CD14-positive monocyte (primary cell): ENCODE measurements at regions of chr12 and their contacts with region 1.

Region 1: DNA sequence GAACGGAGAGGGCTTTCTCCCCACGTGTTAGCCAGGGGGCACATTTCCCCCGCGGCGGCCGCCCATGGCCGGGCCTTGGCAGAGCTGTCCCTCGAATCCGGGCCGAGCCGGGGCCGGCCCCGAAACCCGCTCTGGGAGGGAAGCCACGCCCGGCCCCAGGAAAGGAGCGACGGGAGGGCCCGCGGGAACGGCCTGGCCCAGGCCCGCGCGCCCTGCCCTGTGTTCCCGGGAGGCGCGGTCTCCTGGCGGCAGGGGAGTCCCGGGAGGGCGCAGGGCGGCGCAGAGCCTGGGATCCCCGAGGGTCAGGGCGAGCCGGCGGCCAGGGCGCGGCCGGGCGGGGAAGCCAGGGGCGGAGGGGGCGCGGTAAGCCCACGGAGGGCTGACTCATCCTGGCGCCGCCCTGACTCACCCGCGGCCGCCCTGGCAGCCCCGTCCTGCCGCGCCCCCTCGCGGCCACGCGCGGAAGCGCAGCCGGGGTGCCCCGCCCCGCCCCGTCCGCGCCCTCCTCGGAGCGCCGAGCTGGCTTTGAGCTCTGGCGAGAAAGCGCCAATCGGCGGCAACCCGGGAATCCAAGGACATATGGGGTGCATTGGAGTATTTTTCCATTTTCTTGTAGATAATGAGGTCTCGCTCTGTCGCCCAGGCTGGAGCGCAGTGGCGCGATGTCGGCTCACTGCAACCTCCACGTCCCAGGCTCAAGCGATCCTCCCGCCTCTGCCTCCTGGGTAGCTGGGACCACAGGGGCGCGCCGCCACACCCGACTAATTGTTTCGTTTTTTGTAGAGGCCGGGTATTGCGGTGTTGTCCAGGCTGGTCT is 31.8 kb upstream of the PLEKHG6 start:
- DNase-seq: peak; percentile 84 to 93 (median 92)
- H3K4me3 ChIP-seq: peak overlapping the region; percentile 35 to 72 (median 44)
- H3K4me3 Mint-ChIP-seq: peak overlapping the region; percentile 77 to 88
- H3K27ac ChIP-seq: peak overlapping the region in 1 of 2 donors; percentile 86
- H3K27ac Mint-ChIP-seq: peak overlapping the region; percentile 54 to 94 (median 90)
- H3K4me1 ChIP-seq: peaks cover 7 to 14% of the 10 kb centered on the region in 2 donors
- H3K4me1 Mint-ChIP-seq: peaks cover 9% of the 10 kb centered on the region
- H3K27me3 ChIP-seq: peaks cover 0 to 38% of the 10 kb centered on the region in 2 donors
- H3K27me3 Mint-ChIP-seq: peaks cover 34 to 49% (median 46%) of the 10 kb centered on the region in 3 donors
- CTCF ChIP-seq: peak; percentile 94

Region 2: DNA sequence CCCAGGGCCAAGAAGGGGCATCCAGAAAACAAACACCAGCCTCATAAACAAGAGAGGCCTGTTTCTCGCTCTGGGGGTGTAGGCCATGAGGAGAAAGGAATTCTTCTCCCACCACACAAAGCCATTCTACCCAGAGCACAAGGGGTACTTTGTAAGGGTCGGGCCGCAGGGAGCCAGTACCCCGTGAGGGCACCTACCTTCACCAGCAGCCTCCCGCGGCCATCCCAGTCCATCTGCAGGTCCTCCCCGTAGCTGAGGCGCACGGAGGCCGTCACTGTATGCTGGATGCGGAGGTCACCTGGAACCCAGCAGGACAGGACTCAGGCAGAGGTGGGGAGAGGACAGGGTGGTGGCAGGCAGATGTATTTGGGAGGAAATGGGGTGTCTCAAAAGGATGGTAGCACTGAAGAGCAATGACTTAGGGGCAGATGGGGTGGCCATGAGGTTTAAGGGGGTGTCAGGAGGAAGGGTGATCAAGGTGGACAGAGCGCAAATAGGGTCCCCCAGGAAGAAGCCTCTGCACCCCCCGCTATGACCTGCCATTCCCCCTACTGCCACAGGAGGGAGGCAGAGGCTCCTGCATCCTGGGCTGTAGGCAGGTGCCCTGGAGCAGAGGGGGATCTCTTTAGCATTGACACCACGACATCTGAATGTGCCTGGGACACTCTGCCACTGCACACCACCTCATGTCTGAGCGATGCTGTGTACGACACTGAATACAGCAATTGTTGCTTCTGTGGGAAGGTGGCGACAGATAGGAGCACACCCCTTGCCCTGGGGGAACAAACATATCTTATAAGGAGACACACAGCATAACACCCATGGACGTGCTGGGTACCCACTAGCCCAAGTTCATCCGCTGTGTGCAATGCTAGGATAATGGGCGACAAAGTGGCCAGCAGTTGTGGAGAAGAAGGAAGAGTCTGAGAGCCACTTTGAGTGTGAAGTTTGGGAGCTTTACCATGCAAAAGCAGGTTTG is 215.6 kb before region 1 on chr12:
- intact Hi-C with region 1: loop called in 1 of 2 experiments (anchors 2 kb)
- DNase-seq: peak; percentile 53 to 67 (median 57)
- H3K4me3 ChIP-seq: no peak overlapping the region
- H3K4me3 Mint-ChIP-seq: no peak overlapping the region
- H3K27ac ChIP-seq: no peak overlapping the region
- H3K27ac Mint-ChIP-seq: peak overlapping the region in 2 of 7 donors; percentile 40 to 61
- H3K4me1 ChIP-seq: no peaks in the 10 kb centered on the region
- H3K4me1 Mint-ChIP-seq: peaks cover 20% of the 10 kb centered on the region
- H3K27me3 ChIP-seq: no peaks in the 10 kb centered on the region
- H3K27me3 Mint-ChIP-seq: peaks cover 9 to 13% (median 10%) of the 10 kb centered on the region in 3 donors
- CTCF ChIP-seq: peak; percentile 98

Region 3: GRCh38 chr12:6195665-6196535 is 82.7 kb before region 1 on chr12:
- intact Hi-C with region 1: loop called in 1 of 2 experiments (anchors 2 kb)
- DNase-seq: peak; percentile 47 to 71 (median 68)
- H3K4me3 ChIP-seq: no peak overlapping the region
- H3K4me3 Mint-ChIP-seq: no peak overlapping the region
- H3K27ac ChIP-seq: no peak overlapping the region
- H3K27ac Mint-ChIP-seq: peak overlapping the region in 5 of 7 donors; percentile 41 to 79 (median 52)
- H3K4me1 ChIP-seq: peaks cover 33 to 37% of the 10 kb centered on the region in 2 donors
- H3K4me1 Mint-ChIP-seq: peaks cover 53% of the 10 kb centered on the region
- H3K27me3 ChIP-seq: peaks cover 12 to 28% of the 10 kb centered on the region in 2 donors
- H3K27me3 Mint-ChIP-seq: peaks cover 33 to 51% (median 47%) of the 10 kb centered on the region in 3 donors
- CTCF ChIP-seq: peak; percentile 95

Region 4: DNA sequence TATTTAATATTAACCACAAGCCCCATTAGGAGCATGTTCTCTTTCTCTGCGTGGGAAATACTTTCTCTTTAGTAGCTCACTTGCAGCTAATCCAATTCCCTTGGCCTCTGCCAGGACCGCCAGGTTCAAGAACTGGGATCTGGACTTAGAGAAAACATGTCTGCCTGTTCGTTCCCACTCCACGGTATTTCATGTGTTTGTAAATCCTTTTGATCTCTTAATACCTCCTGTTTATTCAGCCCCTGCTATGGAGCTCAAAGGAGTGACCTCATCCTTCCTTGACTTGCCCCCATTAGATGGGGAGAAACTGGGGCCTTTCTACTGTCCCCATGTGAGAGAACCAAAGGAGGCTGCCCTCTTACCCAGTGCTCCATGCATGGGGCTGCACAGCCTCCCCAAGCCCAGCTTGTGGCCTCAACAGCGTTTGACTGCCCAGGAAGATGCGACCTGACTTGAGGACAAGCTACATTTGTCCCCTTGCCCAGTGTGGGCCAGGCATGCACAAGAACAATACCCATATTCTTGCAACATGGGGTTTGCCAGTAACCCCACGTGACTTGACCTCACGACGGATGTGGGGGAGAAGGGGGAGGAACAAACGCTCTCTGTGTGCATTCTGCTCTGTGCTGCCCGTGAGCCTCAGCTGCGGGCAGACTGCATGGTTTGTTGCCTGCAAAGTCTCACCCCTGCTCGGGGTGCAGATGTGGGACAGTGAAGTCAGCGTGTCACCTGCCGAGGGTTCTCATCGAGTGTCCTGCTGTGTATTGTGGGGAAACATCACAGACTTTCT is 48.1 kb before region 1 on chr12:
- intact Hi-C with region 1: loop called in 1 of 2 experiments (anchors 5 kb)
- DNase-seq: peak; percentile 76 to 90 (median 79)
- H3K4me3 ChIP-seq: peak overlapping the region in 1 of 3 experiments; percentile 46
- H3K4me3 Mint-ChIP-seq: peak overlapping the region; percentile 67 to 80
- H3K27ac ChIP-seq: peak overlapping the region; percentile 39 to 73
- H3K27ac Mint-ChIP-seq: peak overlapping the region; percentile 91 to 97 (median 95)
- H3K4me1 ChIP-seq: peaks cover 32 to 36% of the 10 kb centered on the region in 2 donors
- H3K4me1 Mint-ChIP-seq: peaks cover 46% of the 10 kb centered on the region
- H3K27me3 ChIP-seq: no peaks in the 10 kb centered on the region
- H3K27me3 Mint-ChIP-seq: peaks cover 4 to 13% (median 7%) of the 10 kb centered on the region in 3 donors
- CTCF ChIP-seq: no peak